Upper lobe of right lung (tissue), 1 donor: ENCODE measurements at regions of chr11 and their contacts with region 1.

Region 1: DNA sequence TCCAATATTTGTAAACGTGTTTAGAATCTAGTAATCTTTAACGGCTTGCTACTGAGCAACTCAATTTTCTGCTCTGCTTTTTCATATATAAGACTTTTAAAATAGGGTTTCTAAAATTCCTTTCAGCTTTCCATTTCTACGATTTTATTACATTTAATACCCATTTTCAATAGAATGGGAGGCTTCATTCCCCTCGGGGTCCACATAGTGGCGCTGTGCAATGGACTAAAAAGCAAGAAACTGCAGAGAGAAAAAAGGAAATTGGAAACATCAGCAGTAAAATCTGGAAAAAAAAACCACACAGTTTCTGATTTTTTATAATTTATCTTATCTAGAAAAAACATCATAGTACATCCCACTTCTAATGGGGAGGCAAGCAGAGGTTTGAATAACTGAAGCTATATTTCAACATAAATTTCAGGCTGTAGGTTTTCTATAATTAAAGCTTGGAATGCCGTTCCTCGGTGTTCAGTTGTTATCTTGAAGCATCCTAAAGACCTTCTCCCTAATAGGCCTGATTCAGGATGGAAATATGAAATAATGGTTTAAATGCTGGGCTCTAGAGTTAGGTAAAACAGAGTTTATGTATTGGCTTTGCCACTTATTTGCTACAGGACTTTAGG is 18.7 kb upstream of the JHY start:
- DNase-seq: no peak
- ATAC-seq: peak; percentile 79
- H3K4me3 ChIP-seq: peak overlapping the region; percentile 34
- H3K27ac ChIP-seq: no peak overlapping the region
- H3K4me1 ChIP-seq: no peaks in the 10 kb centered on the region
- H3K27me3 ChIP-seq: peaks cover 9% of the 10 kb centered on the region
- CTCF ChIP-seq: peak; percentile 89

Region 2: GRCh38 chr11:122933416-122933815 is 69.6 kb after region 1 on chr11:
- intact Hi-C with region 1: no loop called
- DNase-seq: no peak
- ATAC-seq: no peak
- H3K4me3 ChIP-seq: no peak overlapping the region
- H3K27ac ChIP-seq: no peak overlapping the region
- H3K4me1 ChIP-seq: no peaks in the 10 kb centered on the region
- H3K27me3 ChIP-seq: no peaks in the 10 kb centered on the region
- CTCF ChIP-seq: no peak

Region 3: DNA sequence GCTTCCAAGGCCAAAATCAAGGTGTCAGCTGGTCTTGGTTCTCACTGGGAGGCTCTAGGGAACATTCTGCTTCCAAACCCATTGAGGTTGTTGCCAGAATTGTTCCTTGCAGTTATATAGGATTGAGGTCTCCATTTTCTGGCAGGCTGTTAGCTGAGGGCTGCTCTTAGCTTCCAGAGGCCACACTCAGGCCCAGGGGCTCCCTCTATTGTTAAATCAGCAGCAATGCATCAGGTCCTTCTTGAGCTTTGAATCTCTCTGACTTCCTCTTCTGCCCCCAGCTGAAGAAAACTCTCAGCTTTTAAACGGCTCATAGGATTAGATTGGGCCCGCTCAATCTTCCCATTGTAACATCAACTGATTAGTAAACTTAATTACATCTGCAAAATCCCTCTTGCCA is 157.2 kb after region 1 on chr11:
- intact Hi-C with region 1: loop called (anchors 10 kb)
- DNase-seq: peak; percentile 65
- ATAC-seq: peak; percentile 92
- H3K4me3 ChIP-seq: no peak overlapping the region
- H3K27ac ChIP-seq: no peak overlapping the region
- H3K4me1 ChIP-seq: peaks cover 9% of the 10 kb centered on the region
- H3K27me3 ChIP-seq: peaks cover 3% of the 10 kb centered on the region
- CTCF ChIP-seq: peak; percentile 64